Sciatic nerve (tissue), 2 donors: ENCODE measurements at regions of chr11 and their contacts with region 1.

Region 1: DNA sequence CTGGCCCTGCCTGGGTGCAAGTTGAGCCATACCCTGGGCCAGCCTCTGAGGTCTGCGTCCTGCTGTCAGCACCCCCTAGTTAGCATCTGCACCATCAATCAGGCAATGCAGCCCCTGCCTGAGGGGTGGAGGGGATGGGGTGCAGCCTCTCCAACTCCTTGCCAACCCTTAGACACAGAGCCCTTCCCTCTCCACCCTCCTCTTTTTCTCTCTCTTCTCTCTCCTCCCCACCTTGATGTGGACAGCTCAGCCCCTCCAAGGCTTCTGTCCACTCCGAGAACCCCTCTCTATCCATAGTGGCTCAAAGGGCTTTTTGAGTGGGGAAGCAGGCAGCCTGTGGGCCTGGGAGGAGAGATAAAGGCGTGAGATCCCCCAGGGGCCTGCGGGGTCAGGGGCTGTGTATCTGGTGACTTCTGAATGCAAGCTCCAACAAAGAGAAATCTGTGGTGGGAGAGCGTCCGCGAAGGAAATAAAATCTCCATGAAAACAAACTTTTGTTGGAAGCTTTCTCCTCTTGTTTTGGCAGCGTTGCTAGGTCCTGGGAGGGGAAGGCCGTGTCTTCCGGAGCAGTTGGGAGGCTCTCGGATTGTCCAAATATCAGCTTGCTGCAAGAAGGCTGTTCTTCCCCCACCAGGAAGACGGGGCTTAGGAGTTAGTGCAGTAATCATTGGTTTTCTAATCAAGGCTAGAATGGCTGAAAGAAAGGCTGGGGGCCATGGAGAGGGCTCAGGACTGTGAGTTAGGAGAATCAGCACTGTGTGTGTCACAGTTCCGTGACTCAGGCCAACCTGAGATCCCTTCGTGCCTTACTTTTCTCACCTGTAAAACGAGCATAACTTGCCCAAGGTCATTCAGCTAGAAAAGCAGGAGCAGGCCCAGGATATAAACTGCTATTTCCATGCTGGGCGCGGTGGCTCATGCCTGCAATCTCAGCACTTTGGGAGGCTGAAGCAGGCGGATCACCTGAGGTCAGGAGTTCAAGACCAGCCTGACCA is 50.3 kb downstream of the PKNOX2 start:
- DNase-seq: peak; percentile 76
- ATAC-seq: peak; percentile 87

Region 2: GRCh38 chr11:125270711-125271110 is 55.8 kb after region 1 on chr11:
- intact Hi-C with region 1: no loop called
- DNase-seq: no peak
- ATAC-seq: no peak

Region 3: DNA sequence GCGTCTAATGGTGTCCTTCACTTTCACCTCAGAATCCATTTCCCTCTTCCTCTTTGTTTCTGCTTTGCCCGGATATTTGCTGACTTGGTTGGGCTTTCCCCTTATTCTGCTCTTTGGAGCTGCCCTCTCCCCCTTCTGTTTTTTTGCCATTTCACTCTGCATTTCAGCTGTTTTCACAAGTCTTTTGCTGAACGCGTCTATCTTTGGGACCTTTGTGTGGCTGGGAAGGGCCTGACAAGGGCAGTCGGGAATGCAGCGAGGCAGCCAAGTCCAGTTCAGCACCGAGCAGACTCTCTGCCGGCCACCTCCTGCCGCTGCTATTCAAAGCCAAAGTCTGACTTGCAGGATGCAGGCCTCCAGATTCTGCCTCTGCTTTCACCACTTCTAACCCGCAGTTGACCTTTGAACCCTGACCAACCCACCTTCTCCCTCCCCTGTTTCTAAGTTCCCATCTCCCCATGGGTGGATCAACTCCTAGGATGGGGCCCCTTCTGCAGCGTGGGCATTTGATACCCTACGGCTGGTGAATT is 243.0 kb after region 1 on chr11:
- intact Hi-C with region 1: no loop called
- DNase-seq: peak; percentile 77
- ATAC-seq: peak; percentile 93

Region 4: DNA sequence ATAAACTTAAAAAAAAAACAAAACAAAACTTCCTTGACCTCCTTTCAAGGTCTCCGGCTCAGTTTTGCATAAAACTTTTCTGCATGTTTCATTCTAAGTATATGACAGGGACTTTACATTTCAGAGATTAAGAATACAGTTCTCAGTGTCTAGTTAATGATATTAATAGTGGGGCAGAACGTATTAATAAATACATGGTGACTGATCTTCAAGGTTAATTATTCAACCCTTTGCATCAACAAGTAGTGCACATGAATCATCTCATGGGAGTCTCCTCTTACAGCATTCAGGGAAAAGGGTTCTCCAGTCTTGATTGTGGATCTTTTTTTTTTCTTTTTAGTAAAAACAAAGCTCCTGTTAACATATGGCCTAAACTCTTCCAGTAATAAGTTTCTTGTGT is 1638.9 kb after region 1 on chr11:
- intact Hi-C with region 1: loop called (anchors 5 kb)
- DNase-seq: no peak
- ATAC-seq: no peak